Psoas muscle (tissue), 8 donors: ENCODE measurements at regions of chr9 and their contacts with region 1.

Region 1: DNA sequence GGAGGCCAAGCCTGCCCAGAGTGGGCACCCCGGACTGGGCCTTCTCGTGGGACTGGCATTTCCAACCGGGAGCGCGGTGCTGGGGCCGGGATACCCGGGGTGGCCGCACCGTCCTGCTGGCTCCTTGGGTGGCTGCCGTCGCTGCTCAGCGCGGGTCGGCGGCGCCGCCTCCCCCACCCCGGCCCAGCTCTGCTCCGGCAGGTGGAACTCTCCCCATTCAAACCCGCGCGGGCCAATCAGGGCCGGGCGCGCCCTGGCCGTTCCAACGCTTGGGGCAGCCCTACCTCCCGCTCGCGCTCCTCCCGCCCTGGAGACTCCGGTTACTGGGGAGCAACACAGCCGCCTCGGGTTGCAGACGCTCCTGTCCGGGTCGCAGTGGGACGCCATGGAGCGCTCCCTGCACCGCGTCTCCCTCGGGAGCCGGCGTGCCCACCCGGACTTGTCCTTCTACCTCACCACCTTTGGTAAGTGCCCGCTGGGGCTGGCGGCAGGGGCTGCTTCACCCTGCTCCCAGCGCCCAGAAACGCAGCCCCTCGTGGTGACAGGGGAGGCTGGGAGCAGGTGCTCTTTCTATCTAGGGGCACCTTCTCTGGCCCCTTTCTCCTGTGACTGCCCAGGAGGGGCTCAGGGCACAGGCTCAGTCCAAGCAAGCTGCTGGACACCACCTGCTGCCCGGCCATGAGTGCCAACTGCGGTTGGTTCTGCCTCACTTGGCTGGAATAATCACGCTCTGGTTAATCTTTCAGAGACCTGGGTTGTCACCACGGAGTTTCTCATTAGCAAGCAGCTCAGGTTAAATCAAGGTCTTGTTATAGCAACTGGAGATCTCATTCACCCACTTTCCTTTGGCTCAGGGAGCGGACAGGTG is at the start of gene RGS3:
- DNase-seq: peak; percentile 51 to 77
- ATAC-seq: peak; percentile 91 to 96 (median 92)
- H3K4me3 ChIP-seq: peak within 1 kb of the TSS; percentile 64
- H3K27ac ChIP-seq: peak within 1 kb of the TSS; percentile 81
- H3K4me1 ChIP-seq: peaks cover 26% of the 10 kb centered on the region
- H3K27me3 ChIP-seq: no peaks in the 10 kb centered on the region
- CTCF ChIP-seq: no peak
- total RNA-seq, gene RGS3: 10.6 to 38.1 (median 18.3) TPM

Region 2: GRCh38 chr9:113486327-113486726 is 22.7 kb after region 1 on chr9:
- intact Hi-C with region 1: loop called in 1 of 2 experiments (anchors 2 kb)
- DNase-seq: no peak
- ATAC-seq: no peak
- H3K4me3 ChIP-seq: no peak overlapping the region
- H3K27ac ChIP-seq: peak overlapping the region; percentile 30
- H3K4me1 ChIP-seq: peaks cover 40% of the 10 kb centered on the region
- H3K27me3 ChIP-seq: no peaks in the 10 kb centered on the region
- CTCF ChIP-seq: no peak

Region 3: DNA sequence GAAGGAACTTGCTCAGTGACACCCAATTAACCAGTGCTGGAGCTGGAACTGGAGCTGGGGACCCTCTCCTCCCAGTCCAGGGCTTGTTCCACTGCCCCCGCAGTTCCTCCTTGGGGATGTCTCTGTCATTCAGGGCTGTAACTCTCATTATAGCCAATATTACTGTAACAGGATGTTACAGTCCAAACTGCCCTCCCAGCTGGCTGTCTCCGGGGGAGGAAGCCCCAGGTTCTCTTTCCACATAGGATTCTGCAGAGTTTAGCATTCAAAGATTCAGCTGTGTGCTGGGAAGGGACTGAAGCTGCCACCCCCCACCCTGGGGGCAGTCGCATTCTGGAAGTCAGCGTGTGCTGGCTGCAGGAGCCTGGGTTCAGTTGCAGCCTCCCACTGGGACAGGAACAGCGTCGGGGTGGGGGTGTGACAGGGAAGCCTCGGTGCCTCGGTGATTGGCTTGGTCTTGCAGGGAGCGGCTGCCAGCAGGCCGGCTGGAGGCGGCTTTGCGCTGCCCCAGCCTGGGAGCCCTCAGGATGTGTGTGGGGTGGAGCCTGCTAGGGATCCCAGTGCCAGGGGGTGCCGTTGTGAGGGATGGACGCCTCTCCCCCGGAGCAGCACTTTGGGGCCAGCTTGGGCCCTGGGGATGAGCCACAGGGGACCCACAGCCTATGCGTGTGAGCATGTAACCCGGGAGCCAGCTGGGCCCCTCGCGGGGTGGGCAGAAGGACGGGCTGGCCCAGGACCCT is 101.0 kb after region 1 on chr9:
- intact Hi-C with region 1: loop called in 1 of 2 experiments (anchors 5 kb)
- DNase-seq: peak; percentile 63 to 72
- ATAC-seq: peak; percentile 39 to 58 (median 44)
- H3K4me3 ChIP-seq: peak overlapping the region; percentile 58
- H3K27ac ChIP-seq: peak overlapping the region; percentile 74
- H3K4me1 ChIP-seq: peaks cover 47% of the 10 kb centered on the region
- H3K27me3 ChIP-seq: no peaks in the 10 kb centered on the region
- CTCF ChIP-seq: no peak

Region 4: GRCh38 chr9:113574441-113575107 is 110.9 kb after region 1 on chr9:
- intact Hi-C with region 1: loop called (anchors 5 kb)
- DNase-seq: peak in 1 of 2 donors; percentile 55
- ATAC-seq: peak; percentile 36 to 88 (median 54)
- H3K4me3 ChIP-seq: no peak overlapping the region
- H3K27ac ChIP-seq: peak overlapping the region; percentile 81
- H3K4me1 ChIP-seq: peaks cover 62% of the 10 kb centered on the region
- H3K27me3 ChIP-seq: no peaks in the 10 kb centered on the region
- CTCF ChIP-seq: no peak